HCT116 (cell line): ENCODE measurements at regions of chr17 and their contacts with region 1.

Region 1: DNA sequence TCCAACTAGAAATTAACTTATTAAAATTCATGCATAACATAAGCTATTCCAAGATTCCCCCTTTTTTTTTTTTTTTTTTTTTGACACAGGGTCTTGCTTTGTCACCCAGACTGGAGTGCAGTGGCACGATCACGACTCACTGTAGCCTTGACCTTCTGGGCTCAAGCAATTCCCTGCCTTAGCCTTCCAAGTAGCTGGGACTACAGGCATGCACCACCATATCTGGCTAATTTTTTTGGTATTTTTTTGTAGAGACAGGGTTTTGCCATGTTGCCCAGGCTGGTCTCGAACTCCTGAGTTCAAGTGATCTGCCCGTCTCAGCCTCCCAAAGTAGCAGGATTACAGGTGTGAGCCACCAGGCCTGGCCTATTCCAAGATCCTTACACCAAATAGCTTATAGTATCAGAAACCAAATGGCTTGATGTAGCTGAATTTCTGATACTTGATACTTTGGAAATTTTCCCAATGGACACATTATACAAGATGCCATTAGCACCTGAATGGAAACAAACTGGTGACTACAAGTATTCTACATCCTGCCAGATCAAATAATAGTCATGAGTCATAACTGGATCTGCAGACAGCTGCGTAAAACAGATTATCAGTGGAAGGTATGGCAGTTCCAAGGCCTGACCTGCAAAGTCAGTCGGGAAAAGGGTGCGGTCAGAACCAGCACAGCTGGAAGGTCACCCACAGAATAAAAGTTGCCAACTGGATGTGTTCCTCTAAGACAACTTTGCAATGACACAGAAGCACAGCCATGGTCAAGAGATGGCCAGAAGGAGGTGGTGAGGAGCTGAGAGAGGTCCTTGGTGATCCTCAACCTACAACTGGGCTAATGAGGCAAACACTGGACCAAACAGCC is 14.5 kb downstream of the TUBG1 start:
- DNase-seq: peak; percentile 56
- ATAC-seq: peak; percentile 82
- H3K4me3 ChIP-seq: peak overlapping the region in 1 of 2 experiments; percentile 13; a peak in 1 of 4 replicates
- H3K27ac ChIP-seq: peak overlapping the region; percentile 47
- H3K4me1 ChIP-seq: peaks cover 15 to 26% of the 10 kb centered on the region in 2 experiments
- H3K27me3 ChIP-seq: no peaks in the 10 kb centered on the region
- CTCF ChIP-seq: peak; percentile 25 to 49 (median 42); a peak in 4 of 6 replicates
- POLR2A ChIP-seq: no peak
- RAD21 ChIP-seq: peak; percentile 48; the same call in 1 of the 2 replicates

Region 2: GRCh38 chr17:42659079-42659931 is 35.3 kb after region 1 on chr17 and contains the start of gene TUBG2:
- CTCF ChIA-PET with region 1: no interaction called
- POLR2A ChIA-PET with region 1: interaction called, 4 read pairs
- RAD21 ChIA-PET with region 1: interaction called in 1 of 2 experiments, 3 read pairs
- intact Hi-C with region 1: loop called (anchors 5 kb)
- DNase-seq: peak; percentile 80
- ATAC-seq: peak; percentile 86
- H3K4me3 ChIP-seq: peak within 1 kb of the TSS; percentile 74 to 76
- H3K27ac ChIP-seq: peak within 1 kb of the TSS; percentile 92
- H3K4me1 ChIP-seq: peaks cover 20 to 43% of the 10 kb centered on the region in 2 experiments
- H3K27me3 ChIP-seq: no peaks in the 10 kb centered on the region
- CTCF ChIP-seq: no peak
- POLR2A ChIP-seq: peak; percentile 94
- RAD21 ChIP-seq: no peak
- total RNA-seq, gene TUBG2: 20.9 TPM

Region 3: DNA sequence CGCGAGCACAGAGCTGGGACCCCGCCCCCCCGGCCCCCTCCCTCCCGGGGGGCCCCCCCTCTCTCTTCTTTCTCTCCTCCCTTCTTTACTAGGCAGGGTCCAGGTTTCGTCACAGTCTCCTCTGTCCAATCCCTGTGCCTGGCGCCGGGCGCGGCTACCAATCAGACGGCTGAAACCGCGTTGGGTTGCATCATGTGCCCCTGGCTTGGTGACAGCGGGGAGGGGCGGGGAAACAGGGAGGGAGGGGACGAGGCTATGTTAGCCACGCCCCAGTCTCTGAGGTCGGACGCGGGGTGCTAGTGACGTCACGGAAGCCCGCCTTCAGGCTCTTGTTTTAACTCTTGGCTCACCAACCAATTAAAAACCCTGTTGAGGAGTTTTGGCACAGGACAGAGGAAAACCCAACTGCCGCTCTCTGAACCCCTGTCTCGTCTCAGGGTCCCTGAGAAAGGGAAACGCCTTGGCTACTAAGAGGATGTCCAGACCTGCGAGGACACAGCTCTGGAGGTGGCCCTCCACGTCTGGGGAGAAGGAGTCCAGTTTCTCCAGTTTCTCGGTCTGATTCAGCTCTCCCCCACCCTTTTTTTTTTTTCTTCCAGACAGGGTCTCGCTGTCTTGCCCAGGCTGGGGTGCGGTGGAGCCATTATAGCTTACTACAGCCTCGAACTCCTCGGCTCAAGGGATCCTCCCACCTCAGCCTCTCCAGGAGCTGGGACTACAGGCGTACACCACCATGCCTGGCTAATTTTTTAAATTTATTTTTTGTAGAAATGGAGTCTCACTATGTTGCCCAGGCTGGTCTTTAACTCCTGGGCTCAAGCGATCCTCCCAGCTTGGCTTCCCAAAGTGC is 53.3 kb after region 1 on chr17:
- CTCF ChIA-PET with region 1: interaction called, 7 read pairs
- POLR2A ChIA-PET with region 1: interaction called, 3 read pairs
- RAD21 ChIA-PET with region 1: interaction called in 1 of 2 experiments, 3 read pairs
- intact Hi-C with region 1: loop called (anchors 5 kb)
- DNase-seq: peak; percentile 99
- ATAC-seq: peak; percentile 71
- H3K4me3 ChIP-seq: peak overlapping the region; percentile 95 to 98
- H3K27ac ChIP-seq: peak overlapping the region; percentile 96
- H3K4me1 ChIP-seq: peaks cover 37 to 72% of the 10 kb centered on the region in 2 experiments
- H3K27me3 ChIP-seq: no peaks in the 10 kb centered on the region
- CTCF ChIP-seq: no peak
- POLR2A ChIP-seq: no peak
- RAD21 ChIP-seq: no peak